A673 (cell line): ENCODE measurements at regions of chr11 and their contacts with region 1.

Region 1: DNA sequence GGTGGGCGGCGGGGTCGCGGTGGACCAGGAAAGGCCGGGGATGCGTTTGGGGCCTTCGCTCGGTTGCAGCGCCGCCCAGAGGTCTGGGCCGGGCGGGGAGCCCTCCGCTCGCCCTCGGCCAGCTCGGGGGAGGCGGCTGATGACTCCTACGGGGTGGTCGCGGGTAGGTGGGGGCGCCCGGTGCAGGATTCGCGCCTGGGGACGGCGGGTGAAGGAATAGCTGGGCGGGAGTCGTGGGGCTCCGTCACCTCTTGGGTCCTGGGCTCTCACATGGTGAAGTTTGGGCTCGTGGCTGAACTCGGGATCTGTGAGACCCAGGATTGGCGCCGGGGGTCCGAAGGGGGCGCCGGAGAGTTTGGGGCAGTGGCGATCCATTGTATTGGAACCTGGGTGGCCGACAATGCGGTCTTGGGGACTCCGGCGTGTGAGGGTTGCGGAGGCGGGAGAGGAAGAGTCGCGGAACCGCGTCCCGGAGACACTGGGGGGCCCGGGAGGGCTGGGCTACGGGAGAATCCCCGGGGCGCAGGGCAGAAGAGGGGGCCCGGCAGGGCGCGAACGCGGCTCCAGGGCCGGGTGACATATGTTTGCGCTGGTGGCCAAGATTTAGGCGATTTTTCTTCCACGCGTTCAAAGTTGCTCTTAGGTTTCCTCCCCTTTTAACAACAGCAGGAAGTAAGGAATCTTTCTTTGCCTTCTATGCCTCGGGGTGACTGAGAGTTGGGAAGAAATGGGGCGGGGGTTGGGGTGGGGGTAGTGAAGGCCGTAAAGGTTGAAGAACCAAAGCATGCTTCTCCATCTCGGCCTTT is 935 bp downstream of the QSER1 start:
- DNase-seq: peak; percentile 86
- H3K4me3 ChIP-seq: peak overlapping the region; percentile 77
- H3K27ac ChIP-seq: peak overlapping the region; percentile 85
- H3K4me1 ChIP-seq: peaks cover 32% of the 10 kb centered on the region
- H3K27me3 ChIP-seq: no peaks in the 10 kb centered on the region
- CTCF ChIP-seq: peak; percentile 81

Region 2: DNA sequence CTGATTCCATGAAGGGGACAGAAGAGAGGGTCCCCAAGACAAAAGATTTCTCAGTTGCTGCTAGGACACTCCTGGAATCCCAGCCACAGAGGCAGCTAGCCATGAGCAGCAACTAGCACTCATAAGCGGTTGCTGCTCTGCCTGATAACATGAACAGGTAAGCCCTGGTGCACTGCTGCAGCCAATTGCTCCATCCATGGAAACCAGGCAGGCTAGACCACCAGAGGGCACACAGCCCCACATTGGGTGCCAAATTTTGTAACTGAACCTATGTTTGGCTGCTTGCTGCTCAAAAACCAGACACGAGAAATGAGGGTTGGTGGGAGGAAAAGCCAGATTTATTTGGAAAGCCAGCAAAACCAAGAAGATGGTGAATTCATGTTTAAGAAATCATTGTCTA is 22.9 kb before region 1 on chr11:
- CTCF ChIA-PET with region 1: no interaction called
- POLR2A ChIA-PET with region 1: no interaction called
- intact Hi-C with region 1: loop called (anchors 2 kb)
- DNase-seq: peak; percentile 77
- H3K4me3 ChIP-seq: no peak overlapping the region
- H3K27ac ChIP-seq: no peak overlapping the region
- H3K4me1 ChIP-seq: no peaks in the 10 kb centered on the region
- H3K27me3 ChIP-seq: peaks cover 12% of the 10 kb centered on the region
- CTCF ChIP-seq: peak; percentile 89